Activated CD4-positive, alpha-beta T cell treated with anti-CD3 and anti-CD28 coated beads for 36 hours (primary cell): ENCODE measurements at regions of chr12 and their contacts with region 1.

Region 1: GRCh38 chr12:19288603-19289244 is 150.6 kb upstream of the AEBP2 start:
- DNase-seq: no peak
- ATAC-seq: no peak
- H3K4me3 Mint-ChIP-seq: no peak overlapping the region
- H3K27ac Mint-ChIP-seq: no peak overlapping the region
- H3K4me1 Mint-ChIP-seq: no peaks in the 10 kb centered on the region
- H3K27me3 Mint-ChIP-seq: no peaks in the 10 kb centered on the region

Region 2: GRCh38 chr12:18250313-18250916 is 1038.3 kb before region 1 on chr12:
- CTCF ChIA-PET with region 1: no interaction called
- POLR2A ChIA-PET with region 1: no interaction called
- intact Hi-C with region 1: loop called in 1 of 2 experiments (anchors 5 kb)
- DNase-seq: no peak
- ATAC-seq: no peak
- H3K4me3 Mint-ChIP-seq: no peak overlapping the region
- H3K27ac Mint-ChIP-seq: no peak overlapping the region
- H3K4me1 Mint-ChIP-seq: no peaks in the 10 kb centered on the region
- H3K27me3 Mint-ChIP-seq: no peaks in the 10 kb centered on the region

Region 3: GRCh38 chr12:18861287-18861858 is 427.4 kb before region 1 on chr12:
- CTCF ChIA-PET with region 1: no interaction called
- POLR2A ChIA-PET with region 1: no interaction called
- intact Hi-C with region 1: loop called in 1 of 2 experiments (anchors 5 kb)
- DNase-seq: no peak
- ATAC-seq: no peak
- H3K4me3 Mint-ChIP-seq: no peak overlapping the region
- H3K27ac Mint-ChIP-seq: no peak overlapping the region
- H3K4me1 Mint-ChIP-seq: no peaks in the 10 kb centered on the region
- H3K27me3 Mint-ChIP-seq: no peaks in the 10 kb centered on the region

Region 4: GRCh38 chr12:19181666-19182426 is 106.9 kb before region 1 on chr12:
- CTCF ChIA-PET with region 1: interaction called, 4 read pairs
- POLR2A ChIA-PET with region 1: no interaction called
- intact Hi-C with region 1: loop called in 1 of 2 experiments (anchors 2 kb)
- DNase-seq: no peak
- ATAC-seq: no peak
- H3K4me3 Mint-ChIP-seq: no peak overlapping the region
- H3K27ac Mint-ChIP-seq: no peak overlapping the region
- H3K4me1 Mint-ChIP-seq: peaks cover under 1% of the 10 kb centered on the region
- H3K27me3 Mint-ChIP-seq: no peaks in the 10 kb centered on the region

Region 5: DNA sequence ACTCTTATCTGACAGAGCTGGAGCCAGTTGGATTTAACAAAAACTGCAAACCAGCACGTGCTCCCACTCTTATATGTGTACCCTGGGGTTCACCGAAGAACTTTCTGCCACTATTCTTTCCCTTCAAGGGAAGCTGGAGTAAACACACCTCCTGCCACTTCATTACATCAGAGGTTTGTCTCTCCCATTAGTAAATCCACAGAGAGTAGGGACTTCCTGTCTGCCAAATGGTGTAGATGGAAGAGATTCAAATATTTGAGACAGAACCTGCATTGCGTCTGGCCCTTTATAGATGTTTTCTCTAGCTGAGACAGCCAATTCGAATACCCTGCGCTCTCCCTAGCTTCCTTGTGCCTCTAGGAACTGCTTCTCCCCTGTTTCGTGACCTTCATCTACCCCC is 121.5 kb after region 1 on chr12:
- CTCF ChIA-PET with region 1: no interaction called
- POLR2A ChIA-PET with region 1: no interaction called
- intact Hi-C with region 1: no loop called
- DNase-seq: no peak
- ATAC-seq: no peak
- H3K4me3 Mint-ChIP-seq: no peak overlapping the region
- H3K27ac Mint-ChIP-seq: no peak overlapping the region
- H3K4me1 Mint-ChIP-seq: no peaks in the 10 kb centered on the region
- H3K27me3 Mint-ChIP-seq: peaks cover 2% of the 10 kb centered on the region